HCT116 (cell line): ENCODE measurements at regions of chr4 and their contacts with region 1.

Region 1: DNA sequence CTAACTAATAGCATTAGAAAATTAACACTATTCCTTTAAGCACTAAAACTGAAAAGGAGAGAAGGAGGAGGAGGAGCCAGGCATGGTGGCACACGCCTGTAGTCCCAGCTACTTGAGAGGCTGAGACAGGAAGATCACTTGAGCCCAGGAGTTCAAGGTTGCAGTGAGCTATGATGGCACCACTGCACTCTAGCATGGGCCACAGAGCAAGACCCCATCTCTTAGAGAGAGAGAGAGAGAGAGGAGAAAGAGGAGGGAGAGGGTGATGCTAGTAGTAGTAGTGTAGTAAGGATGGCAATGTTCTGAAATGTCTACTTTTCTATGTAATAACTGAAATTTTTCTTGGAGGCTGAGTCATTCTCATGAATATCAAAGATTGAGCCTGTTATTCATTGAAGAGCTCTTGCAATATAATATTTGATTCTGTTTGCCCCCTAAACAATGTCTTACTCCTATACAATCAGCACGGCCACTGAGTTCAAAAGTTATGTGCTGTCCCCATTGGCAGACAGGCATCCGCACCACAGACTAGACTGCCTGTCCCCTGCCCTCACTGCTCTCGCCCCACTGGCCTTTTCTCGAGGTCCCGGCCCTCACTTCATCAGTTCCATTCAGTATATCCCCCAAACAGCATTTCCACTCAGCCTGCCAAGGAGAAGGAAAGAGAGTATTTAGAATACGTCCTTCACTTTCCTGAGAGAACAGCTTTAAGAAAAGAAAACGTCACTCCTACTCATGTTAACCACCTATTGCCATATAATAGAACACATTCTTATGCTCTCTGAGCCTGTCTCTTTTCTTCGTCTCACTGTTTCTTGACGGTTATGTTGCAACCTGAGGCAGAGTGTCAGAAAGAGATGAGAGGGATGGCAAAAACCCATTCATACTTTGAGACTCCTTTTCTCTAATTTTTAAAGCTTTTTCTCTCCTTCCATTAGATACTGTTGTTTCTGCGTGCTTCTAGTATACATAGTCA is 238.1 kb downstream of the PALLD start:
- DNase-seq: no peak
- ATAC-seq: no peak
- H3K4me3 ChIP-seq: no peak overlapping the region
- H3K27ac ChIP-seq: no peak overlapping the region
- H3K4me1 ChIP-seq: no peaks in the 10 kb centered on the region; a peak in 1 of 4 replicates
- H3K27me3 ChIP-seq: no peaks in the 10 kb centered on the region
- CTCF ChIP-seq: no peak
- POLR2A ChIP-seq: no peak
- RAD21 ChIP-seq: no peak

Region 2: GRCh38 chr4:168769416-168769815 is 34.4 kb after region 1 on chr4:
- CTCF ChIA-PET with region 1: no interaction called
- POLR2A ChIA-PET with region 1: no interaction called
- RAD21 ChIA-PET with region 1: no interaction called
- intact Hi-C with region 1: loop called (anchors 1 kb)
- DNase-seq: no peak
- ATAC-seq: no peak
- H3K4me3 ChIP-seq: no peak overlapping the region
- H3K27ac ChIP-seq: no peak overlapping the region
- H3K4me1 ChIP-seq: peaks cover 6 to 38% of the 10 kb centered on the region in 2 experiments; a peak in 3 of 4 replicates
- H3K27me3 ChIP-seq: no peaks in the 10 kb centered on the region
- CTCF ChIP-seq: no peak
- POLR2A ChIP-seq: no peak
- RAD21 ChIP-seq: no peak

Region 3: DNA sequence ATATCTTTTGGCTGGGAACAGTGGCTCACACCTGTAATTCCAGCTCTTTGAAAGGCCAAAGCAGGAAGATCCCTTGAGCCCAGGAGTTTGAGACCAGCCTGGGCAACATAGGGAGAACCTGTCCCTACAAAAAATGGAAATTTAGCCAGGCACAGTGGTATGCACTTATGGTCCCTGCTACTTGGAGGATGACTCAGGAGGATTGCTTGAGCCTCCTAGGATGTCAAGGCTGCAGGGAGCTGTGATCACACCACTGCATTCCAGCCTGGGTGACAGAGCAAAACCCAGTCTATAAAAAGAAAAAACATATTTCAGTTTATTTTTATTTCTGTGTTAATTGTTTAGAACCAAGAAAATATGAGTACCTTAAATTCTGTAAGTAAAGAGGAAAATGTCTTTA is 151.4 kb after region 1 on chr4:
- CTCF ChIA-PET with region 1: no interaction called
- POLR2A ChIA-PET with region 1: no interaction called
- RAD21 ChIA-PET with region 1: no interaction called
- intact Hi-C with region 1: no loop called
- DNase-seq: peak; percentile 21
- ATAC-seq: peak; percentile 86
- H3K4me3 ChIP-seq: no peak overlapping the region
- H3K27ac ChIP-seq: peak overlapping the region; percentile 31; the same call in 1 of the 2 replicates
- H3K4me1 ChIP-seq: peaks cover 2 to 42% of the 10 kb centered on the region in 2 experiments; a peak in 2 of 4 replicates
- H3K27me3 ChIP-seq: no peaks in the 10 kb centered on the region
- CTCF ChIP-seq: no peak
- POLR2A ChIP-seq: no peak
- RAD21 ChIP-seq: no peak

Region 4: DNA sequence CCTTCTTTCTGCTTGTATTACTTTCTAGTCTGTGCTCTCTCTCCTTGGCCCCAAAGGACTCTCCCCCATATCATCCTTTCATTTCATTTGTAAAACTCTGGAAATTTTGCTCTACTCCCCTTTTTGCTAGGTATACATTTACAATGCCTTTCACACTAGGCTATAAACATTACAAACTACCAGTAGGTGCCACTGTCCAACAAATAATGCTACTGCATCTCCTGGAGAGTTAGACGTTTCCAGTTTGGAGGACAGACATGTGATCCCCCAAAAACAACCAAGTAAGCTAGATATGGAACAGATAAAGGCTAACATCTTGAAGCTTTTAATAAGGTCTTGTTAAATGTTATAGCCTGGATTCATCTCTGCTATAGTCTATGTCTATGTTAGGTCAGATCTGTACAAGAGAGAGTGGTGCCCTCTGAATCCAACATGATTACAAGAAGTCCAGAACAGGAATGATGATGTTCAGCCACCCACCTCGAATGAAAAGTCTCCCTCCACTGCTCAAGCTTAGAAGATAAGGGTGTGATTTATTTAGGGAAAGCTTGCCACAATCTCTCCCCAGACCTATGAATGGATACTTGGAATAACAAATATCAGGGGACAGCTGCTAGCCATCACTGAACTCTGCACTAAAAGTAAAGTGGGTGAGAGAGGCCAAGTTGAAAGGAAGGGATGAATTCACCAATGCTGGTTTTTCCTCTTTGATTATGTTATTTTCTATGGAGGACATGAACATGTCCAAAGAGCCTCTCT is 260.7 kb after region 1 on chr4:
- CTCF ChIA-PET with region 1: no interaction called
- POLR2A ChIA-PET with region 1: no interaction called
- RAD21 ChIA-PET with region 1: no interaction called
- intact Hi-C with region 1: no loop called
- DNase-seq: no peak
- ATAC-seq: peak; percentile 66; the same call in 1 of the 2 replicates
- H3K4me3 ChIP-seq: no peak overlapping the region
- H3K27ac ChIP-seq: no peak overlapping the region
- H3K4me1 ChIP-seq: peaks cover 13 to 19% of the 10 kb centered on the region in 2 experiments
- H3K27me3 ChIP-seq: no peaks in the 10 kb centered on the region
- CTCF ChIP-seq: peak in 2 of 3 experiments; percentile 28 to 47; a peak in 3 of 6 replicates
- POLR2A ChIP-seq: no peak
- RAD21 ChIP-seq: peak; percentile 60